ENCODE measurements at regions of chr13 and their contacts with region 1.

Region 1: DNA sequence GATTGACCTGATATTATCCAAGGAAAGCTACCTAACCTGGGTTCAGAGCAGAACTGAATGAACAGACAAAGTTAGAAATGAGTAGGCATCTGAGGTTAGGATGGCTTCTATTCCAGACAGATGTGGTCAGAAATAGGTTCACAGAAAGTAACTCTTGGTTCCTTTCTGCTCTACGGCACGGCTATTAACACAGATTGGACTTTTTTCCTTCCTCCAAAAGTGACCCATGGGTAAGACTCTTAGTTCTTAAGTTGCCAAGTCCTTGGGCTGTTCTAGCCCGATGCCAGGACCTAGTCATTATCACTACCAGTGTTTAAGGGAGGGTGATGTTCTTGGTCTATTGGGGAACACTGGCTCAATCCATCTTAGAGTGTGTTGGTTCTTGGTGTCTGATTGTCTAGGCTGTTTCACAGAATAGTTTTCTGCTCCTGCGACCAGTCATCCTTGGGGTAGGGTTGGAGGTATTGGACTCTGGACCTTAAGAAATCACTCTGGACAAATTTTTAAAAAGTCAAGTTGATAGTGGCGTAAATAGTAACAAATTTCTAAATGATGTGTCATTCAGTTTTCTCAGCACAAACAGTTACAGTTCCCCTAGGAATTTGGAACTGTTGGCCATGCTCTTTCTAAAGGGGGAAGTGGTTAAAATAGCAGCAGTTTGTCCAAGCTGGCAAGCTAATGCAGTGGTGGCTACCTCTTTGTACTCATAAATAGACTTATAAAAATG is 60.1 kb upstream of the MYCBP2 start:
- DNase-seq: peak; percentile 38 to 68
- ATAC-seq: peak; percentile 77 to 78
- H3K4me3 ChIP-seq: no peak overlapping the region
- H3K27ac ChIP-seq: peak overlapping the region; percentile 32 to 64 (median 56)
- H3K4me1 ChIP-seq: no peaks in the 10 kb centered on the region
- H3K27me3 ChIP-seq: no peaks in the 10 kb centered on the region
- CTCF ChIP-seq: no peak
- POLR2A ChIP-seq: no peak

Region 2: GRCh38 chr13:76937281-76937820 is 449.7 kb before region 1 on chr13:
- in situ Hi-C with region 1: no loop called
- intact Hi-C with region 1: no loop called
- DNase-seq: no peak
- ATAC-seq: no peak
- H3K4me3 ChIP-seq: no peak overlapping the region
- H3K27ac ChIP-seq: no peak overlapping the region
- H3K4me1 ChIP-seq: no peaks in the 10 kb centered on the region
- H3K27me3 ChIP-seq: no peaks in the 10 kb centered on the region
- CTCF ChIP-seq: no peak
- POLR2A ChIP-seq: no peak

Region 3: DNA sequence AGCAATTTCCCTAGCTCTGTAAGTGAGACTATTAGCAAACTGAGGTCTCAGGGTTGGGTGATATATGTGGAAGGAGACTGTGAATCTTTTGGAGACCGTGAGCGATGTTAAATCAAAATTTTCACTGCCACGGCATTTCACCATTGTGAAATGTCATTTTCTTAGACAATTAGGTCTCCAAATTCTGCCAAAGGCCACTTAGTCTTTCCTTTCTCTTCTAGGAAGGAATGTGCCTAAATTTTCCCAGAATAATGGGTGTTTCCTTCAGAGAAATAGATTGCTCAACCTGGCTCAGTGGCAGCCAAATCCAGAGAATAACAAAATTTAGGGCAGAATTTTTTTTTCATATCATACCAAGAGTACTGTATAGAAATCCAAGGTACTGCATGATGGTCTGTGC is 83.9 kb after region 1 on chr13:
- in situ Hi-C with region 1: no loop called
- intact Hi-C with region 1: loop called (anchors 5 kb)
- DNase-seq: no peak
- ATAC-seq: peak; percentile 33 to 64
- H3K4me3 ChIP-seq: no peak overlapping the region
- H3K27ac ChIP-seq: peak overlapping the region in 2 of 4 donors; percentile 33 to 36
- H3K4me1 ChIP-seq: no peaks in the 10 kb centered on the region
- H3K27me3 ChIP-seq: no peaks in the 10 kb centered on the region
- CTCF ChIP-seq: no peak
- POLR2A ChIP-seq: no peak